ENCODE measurements at regions of chr15 and their contacts with region 1.

Region 1: GRCh38 chr15:70488002-70488605 is 275.3 kb downstream of the UACA start:
- DNase-seq: peak; percentile 75
- H3K4me3 Mint-ChIP-seq: no peak overlapping the region
- H3K27ac Mint-ChIP-seq: no peak overlapping the region
- H3K4me1 Mint-ChIP-seq: peaks cover 78% of the 10 kb centered on the region
- H3K27me3 Mint-ChIP-seq: peaks cover 61% of the 10 kb centered on the region

Region 2: GRCh38 chr15:70385072-70385535 is 103.0 kb before region 1 on chr15:
- CTCF ChIA-PET with region 1: no interaction called
- POLR2A ChIA-PET with region 1: no interaction called
- DNase-seq: no peak
- H3K4me3 Mint-ChIP-seq: no peak overlapping the region
- H3K27ac Mint-ChIP-seq: no peak overlapping the region
- H3K4me1 Mint-ChIP-seq: no peaks in the 10 kb centered on the region
- H3K27me3 Mint-ChIP-seq: peaks cover 3% of the 10 kb centered on the region

Region 3: DNA sequence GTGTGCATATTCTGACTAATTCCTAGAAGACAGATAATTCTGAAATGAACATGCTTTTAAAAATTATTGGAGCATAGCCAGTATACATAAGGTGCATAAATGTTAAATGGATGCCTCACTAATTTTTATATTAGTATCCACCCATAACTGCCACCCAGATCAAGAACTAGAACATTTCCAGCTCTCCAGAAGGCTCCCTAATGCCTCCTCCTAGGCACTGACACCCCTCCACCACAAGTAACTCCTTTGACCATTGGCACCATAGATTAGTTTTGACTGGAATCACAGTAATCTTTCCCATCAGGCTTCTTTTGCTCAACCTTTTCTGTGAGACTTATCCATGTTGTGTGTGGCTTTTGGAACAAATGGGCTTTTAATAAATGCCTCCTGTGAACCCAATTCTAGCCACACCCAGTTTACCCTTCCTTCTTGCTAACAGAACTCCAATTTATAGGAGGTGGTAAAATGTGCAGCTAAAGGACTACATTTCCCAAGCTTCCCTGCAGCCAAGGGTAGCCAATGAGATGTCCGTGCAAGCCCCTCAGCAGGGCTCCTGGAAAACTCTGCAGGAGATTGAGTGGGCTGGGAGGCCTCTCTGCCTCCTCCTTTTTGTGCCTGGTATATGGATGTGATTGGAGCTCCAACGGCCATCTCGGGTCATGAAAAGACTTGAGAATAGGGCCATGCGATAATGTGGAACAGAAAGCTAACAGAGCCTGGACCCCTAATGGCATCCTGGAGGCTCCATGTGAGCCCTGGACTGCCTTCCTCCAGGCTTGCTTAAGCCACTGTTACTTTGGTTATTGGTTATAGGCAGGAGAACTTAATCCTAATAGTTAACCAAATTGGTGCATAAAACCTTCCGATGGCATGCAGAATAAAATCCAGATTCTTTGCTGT is 67.8 kb before region 1 on chr15:
- CTCF ChIA-PET with region 1: no interaction called
- POLR2A ChIA-PET with region 1: no interaction called
- DNase-seq: no peak
- H3K4me3 Mint-ChIP-seq: no peak overlapping the region
- H3K27ac Mint-ChIP-seq: no peak overlapping the region
- H3K4me1 Mint-ChIP-seq: peaks cover 15% of the 10 kb centered on the region
- H3K27me3 Mint-ChIP-seq: peaks cover 36% of the 10 kb centered on the region

Region 4: GRCh38 chr15:70466895-70467529 is 21.1 kb before region 1 on chr15:
- CTCF ChIA-PET with region 1: interaction called, 15 read pairs
- POLR2A ChIA-PET with region 1: no interaction called
- DNase-seq: peak; percentile 61
- H3K4me3 Mint-ChIP-seq: no peak overlapping the region
- H3K27ac Mint-ChIP-seq: no peak overlapping the region
- H3K4me1 Mint-ChIP-seq: peaks cover 5% of the 10 kb centered on the region
- H3K27me3 Mint-ChIP-seq: peaks cover 89% of the 10 kb centered on the region

Region 5: DNA sequence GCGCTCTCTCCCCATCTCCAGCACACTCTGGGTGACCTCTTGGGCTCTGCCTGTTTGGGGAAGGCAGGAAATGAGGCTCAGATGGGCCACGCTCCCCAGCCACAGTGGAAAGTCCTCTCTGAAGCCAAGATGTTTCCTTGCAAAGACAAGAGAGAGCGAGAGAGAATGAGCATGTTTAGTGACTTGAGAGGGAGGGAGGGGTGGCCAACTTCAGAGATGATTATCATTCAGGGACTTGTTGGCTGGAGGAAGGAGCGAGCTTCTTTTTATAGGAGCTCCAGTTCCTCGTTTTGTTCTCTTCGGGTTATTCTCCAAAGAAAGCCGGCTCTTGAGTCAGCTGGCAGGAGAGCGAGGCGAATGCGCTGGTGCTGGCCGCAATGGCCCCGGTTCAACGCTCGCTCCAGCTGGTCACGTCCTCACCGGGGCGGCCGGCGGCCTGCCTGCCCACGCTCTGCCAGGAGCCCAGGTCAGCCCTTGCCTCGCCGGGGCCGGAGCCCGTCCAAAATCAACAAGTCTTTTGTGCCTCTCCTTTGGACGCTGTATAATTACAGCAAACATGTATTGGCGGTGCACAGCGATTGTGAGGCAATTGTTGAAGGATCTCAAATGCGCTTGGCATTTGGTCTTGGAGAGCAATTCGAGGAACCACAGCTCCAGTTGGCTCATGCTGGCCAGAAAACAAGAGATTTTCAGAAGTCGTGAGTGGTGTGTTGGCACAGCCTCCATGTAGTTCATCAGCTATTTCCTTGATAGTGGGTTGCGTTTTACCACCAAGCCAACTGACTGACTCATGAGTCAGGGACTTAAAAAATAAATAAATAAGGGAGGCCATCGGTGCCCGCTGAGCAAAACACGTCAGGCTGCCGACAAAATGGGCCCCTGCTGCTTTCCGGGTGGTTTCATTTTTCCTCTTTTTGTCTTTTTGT is 13.4 kb before region 1 on chr15:
- CTCF ChIA-PET with region 1: interaction called, 12 read pairs
- POLR2A ChIA-PET with region 1: no interaction called
- DNase-seq: no peak
- H3K4me3 Mint-ChIP-seq: peak overlapping the region; percentile 47
- H3K27ac Mint-ChIP-seq: no peak overlapping the region
- H3K4me1 Mint-ChIP-seq: peaks cover 44% of the 10 kb centered on the region
- H3K27me3 Mint-ChIP-seq: peaks cover 79% of the 10 kb centered on the region

Region 6: GRCh38 chr15:70512772-70513362 is 24.8 kb after region 1 on chr15:
- CTCF ChIA-PET with region 1: interaction called, 219 read pairs
- POLR2A ChIA-PET with region 1: interaction called, 5 read pairs
- DNase-seq: peak; percentile 76
- H3K4me3 Mint-ChIP-seq: no peak overlapping the region
- H3K27ac Mint-ChIP-seq: no peak overlapping the region
- H3K4me1 Mint-ChIP-seq: peaks cover 23% of the 10 kb centered on the region
- H3K27me3 Mint-ChIP-seq: peaks cover 34% of the 10 kb centered on the region

Region 7: DNA sequence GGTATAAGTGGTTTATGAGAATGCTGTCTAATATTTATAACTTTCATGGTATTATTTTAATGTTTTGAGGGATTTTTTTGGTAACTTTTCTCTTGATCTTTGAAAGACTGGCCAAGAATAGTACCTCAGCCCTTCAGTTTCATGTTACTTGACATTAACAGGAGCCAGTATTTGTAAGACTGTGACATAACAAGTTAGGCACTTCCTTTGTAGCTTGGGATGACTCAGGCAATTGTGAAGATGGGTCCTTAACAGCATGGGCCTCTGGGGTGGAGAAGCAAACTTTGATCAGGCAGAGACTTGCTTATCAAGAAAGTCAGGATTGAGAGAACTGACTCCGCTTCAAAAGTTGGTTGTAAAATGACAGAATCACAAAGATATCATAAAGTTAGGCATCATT is 414.0 kb after region 1 on chr15:
- CTCF ChIA-PET with region 1: no interaction called
- POLR2A ChIA-PET with region 1: no interaction called
- DNase-seq: no peak
- H3K4me3 Mint-ChIP-seq: no peak overlapping the region
- H3K27ac Mint-ChIP-seq: no peak overlapping the region
- H3K4me1 Mint-ChIP-seq: no peaks in the 10 kb centered on the region
- H3K27me3 Mint-ChIP-seq: peaks cover 10% of the 10 kb centered on the region